HAP-1 (cell line): ENCODE measurements at regions of chr6 and their contacts with region 1.

Region 1: DNA sequence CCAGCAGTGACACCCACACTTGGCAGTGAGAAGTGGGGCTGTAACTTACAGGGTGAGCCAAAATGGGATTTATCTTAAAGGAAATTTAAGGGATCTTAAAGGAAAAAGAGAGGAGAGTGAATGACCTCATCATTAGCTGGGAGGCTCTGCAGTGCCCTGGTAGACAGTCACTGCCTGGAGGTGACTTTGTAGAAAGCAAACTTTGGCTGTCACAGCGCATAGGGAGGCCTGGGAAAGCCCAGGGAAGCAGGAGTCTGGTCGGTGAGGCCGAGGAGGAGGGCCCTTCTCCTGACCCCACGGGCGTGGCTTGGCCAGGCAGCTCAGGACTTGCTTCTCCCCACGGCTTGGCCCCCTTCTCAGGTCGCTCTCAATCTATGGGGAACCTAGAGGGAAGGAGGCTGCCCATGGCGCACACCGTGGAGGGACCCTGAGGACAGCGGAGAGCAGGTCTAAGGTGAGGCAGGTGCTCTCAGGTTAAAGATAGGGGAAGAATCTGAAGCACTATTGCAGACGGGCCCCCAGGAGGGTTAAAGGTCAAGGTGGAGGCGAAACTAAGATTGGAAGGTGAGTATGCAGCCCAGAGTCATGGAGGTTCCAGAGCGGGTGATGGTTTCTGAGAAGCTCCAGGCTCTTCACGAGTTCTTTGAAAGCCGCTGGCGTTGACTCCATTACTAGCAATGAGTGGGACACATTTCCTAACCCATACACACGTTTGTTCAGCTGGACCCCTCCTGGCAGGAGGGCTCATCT is 15.6 kb upstream of the RIPK1 start:
- DNase-seq: no peak
- H3K4me3 ChIP-seq: peak overlapping the region; percentile 43
- H3K4me1 ChIP-seq: peaks cover 15% of the 10 kb centered on the region
- H3K27me3 ChIP-seq: no peaks in the 10 kb centered on the region

Region 2: DNA sequence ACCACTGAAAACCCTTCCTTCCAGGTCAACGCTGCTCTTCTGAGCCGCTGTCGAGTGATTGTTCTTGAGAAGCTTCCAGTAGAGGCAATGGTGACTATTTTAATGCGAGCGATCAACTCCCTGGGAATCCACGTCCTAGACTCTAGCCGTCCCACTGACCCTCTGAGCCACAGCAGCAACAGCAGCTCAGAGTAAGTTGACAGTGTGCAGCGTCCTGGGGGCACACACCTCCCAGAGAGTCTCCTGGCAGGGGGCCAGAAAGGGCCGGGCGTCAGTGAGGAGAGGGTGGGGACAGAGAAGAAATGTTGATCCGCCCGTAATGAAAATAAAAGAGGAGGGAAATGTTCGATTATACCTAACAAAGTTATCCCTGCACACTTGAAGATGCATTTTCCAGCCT is 282.5 kb before region 1 on chr6:
- in situ Hi-C with region 1: loop called (anchors 10 kb)
- DNase-seq: peak; percentile 80 to 94
- H3K4me3 ChIP-seq: peak overlapping the region; percentile 3
- H3K4me1 ChIP-seq: peaks cover 37% of the 10 kb centered on the region
- H3K27me3 ChIP-seq: no peaks in the 10 kb centered on the region

Region 3: DNA sequence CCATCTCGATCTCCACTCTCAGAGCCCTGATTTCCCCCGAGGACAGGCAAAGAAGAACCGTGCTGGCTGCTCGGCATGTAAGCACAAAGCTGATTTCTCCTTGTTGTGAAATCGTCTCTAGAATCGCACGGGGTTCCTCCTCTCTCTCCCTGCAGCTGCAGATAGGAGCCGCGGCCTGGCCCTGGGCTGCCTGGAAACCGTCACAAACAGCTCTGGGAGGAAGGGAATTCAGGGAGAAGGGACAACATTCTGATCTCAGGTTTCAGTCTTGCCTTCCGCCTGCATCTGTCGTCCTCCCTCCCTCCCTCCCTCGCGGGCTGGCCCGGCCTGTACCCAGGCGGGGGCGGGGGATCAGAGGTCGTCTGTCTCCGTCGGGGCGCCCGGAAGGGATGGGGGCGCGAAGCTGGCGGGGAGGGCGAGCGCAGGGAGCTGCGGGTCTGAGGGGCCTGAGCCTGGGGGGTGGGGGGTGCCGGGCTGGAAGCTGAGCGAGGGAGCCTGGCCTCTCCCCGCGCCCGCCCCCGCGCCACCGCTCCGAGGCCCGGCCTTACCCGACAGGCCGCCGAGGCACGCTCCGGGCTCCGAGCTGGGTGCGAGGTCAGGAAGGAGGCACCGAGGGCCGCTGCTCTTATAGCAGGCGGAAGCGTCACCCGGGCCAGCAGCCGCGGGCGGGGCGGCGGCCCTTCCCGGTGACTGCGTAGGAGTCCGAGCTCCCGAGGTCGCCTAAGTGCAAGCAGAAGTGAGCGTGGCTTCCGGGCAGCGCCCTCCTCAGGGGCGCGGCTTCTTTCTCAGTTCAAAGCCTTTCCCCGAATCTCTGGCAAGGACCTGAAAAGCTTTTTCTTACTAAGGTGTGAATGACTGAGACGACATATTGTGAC is 211.2 kb before region 1 on chr6 and contains the start of gene SERPINB1:
- in situ Hi-C with region 1: loop called (anchors 5 kb)
- DNase-seq: peak; percentile 81 to 86
- H3K4me3 ChIP-seq: peak within 1 kb of the TSS; percentile 31
- H3K4me1 ChIP-seq: peaks cover 31% of the 10 kb centered on the region
- H3K27me3 ChIP-seq: no peaks in the 10 kb centered on the region

Region 4: GRCh38 chr6:2999618-3000557 is 52.8 kb before region 1 on chr6 and contains the start of gene NQO2:
- in situ Hi-C with region 1: loop called (anchors 5 kb)
- DNase-seq: peak; percentile 81 to 97
- H3K4me3 ChIP-seq: peak within 1 kb of the TSS; percentile 90
- H3K4me1 ChIP-seq: peaks cover 22% of the 10 kb centered on the region
- H3K27me3 ChIP-seq: no peaks in the 10 kb centered on the region